ENCODE measurements at regions of chr7 and their contacts with region 1.

Region 1: GRCh38 chr7:43260980-43261878 is 148.8 kb downstream of the HECW1 start:
- DNase-seq: peak; percentile 71
- H3K4me3 ChIP-seq: no peak overlapping the region
- H3K27ac ChIP-seq: no peak overlapping the region
- H3K4me1 ChIP-seq: no peaks in the 10 kb centered on the region
- H3K27me3 ChIP-seq: no peaks in the 10 kb centered on the region
- CTCF ChIP-seq: peak; percentile 74 to 90 (median 89)
- EP300 ChIP-seq: no peak
- POLR2A ChIP-seq: no peak

Region 2: GRCh38 chr7:42940985-42941847 is 320.0 kb before region 1 on chr7:
- in situ Hi-C with region 1: loop called in 1 of 4 experiments (anchors 10 kb)
- intact Hi-C with region 1: loop called (anchors 5 kb)
- DNase-seq: peak; percentile 73
- H3K4me3 ChIP-seq: no peak overlapping the region
- H3K27ac ChIP-seq: no peak overlapping the region
- H3K4me1 ChIP-seq: no peaks in the 10 kb centered on the region
- H3K27me3 ChIP-seq: no peaks in the 10 kb centered on the region
- CTCF ChIP-seq: peak; percentile 62 to 86 (median 85)
- EP300 ChIP-seq: no peak
- POLR2A ChIP-seq: no peak

Region 3: GRCh38 chr7:42972699-42973500 is 288.3 kb before region 1 on chr7:
- in situ Hi-C with region 1: loop called in 1 of 4 experiments (anchors 25 kb)
- intact Hi-C with region 1: no loop called
- DNase-seq: peak; percentile 17
- H3K4me3 ChIP-seq: no peak overlapping the region
- H3K27ac ChIP-seq: peak overlapping the region; percentile 46 to 64 (median 61)
- H3K4me1 ChIP-seq: peaks cover 0 to 6% (median 0%) of the 10 kb centered on the region in 4 donors
- H3K27me3 ChIP-seq: no peaks in the 10 kb centered on the region
- CTCF ChIP-seq: no peak
- EP300 ChIP-seq: peak; percentile 71
- POLR2A ChIP-seq: no peak

Region 4: GRCh38 chr7:43700059-43700501 is 438.9 kb after region 1 on chr7:
- in situ Hi-C with region 1: loop called in 1 of 4 experiments (anchors 25 kb)
- intact Hi-C with region 1: no loop called
- DNase-seq: no peak
- H3K4me3 ChIP-seq: no peak overlapping the region
- H3K27ac ChIP-seq: no peak overlapping the region
- H3K4me1 ChIP-seq: peaks cover 0 to 9% (median 0%) of the 10 kb centered on the region in 4 donors
- H3K27me3 ChIP-seq: no peaks in the 10 kb centered on the region
- CTCF ChIP-seq: peak; percentile 63 to 82 (median 70)
- EP300 ChIP-seq: no peak
- POLR2A ChIP-seq: no peak

Measured in transverse colon (tissue), 4 donors.